Psoas muscle (tissue), 8 donors: ENCODE measurements at regions of chr17 and their contacts with region 1.

Region 1: GRCh38 chr17:42061646-42062487 is 11.5 kb upstream of the C17orf113 start:
- DNase-seq: no peak
- ATAC-seq: no peak
- H3K4me3 ChIP-seq: no peak overlapping the region
- H3K27ac ChIP-seq: no peak overlapping the region
- H3K4me1 ChIP-seq: peaks cover 10% of the 10 kb centered on the region
- H3K27me3 ChIP-seq: no peaks in the 10 kb centered on the region
- CTCF ChIP-seq: no peak

Region 2: DNA sequence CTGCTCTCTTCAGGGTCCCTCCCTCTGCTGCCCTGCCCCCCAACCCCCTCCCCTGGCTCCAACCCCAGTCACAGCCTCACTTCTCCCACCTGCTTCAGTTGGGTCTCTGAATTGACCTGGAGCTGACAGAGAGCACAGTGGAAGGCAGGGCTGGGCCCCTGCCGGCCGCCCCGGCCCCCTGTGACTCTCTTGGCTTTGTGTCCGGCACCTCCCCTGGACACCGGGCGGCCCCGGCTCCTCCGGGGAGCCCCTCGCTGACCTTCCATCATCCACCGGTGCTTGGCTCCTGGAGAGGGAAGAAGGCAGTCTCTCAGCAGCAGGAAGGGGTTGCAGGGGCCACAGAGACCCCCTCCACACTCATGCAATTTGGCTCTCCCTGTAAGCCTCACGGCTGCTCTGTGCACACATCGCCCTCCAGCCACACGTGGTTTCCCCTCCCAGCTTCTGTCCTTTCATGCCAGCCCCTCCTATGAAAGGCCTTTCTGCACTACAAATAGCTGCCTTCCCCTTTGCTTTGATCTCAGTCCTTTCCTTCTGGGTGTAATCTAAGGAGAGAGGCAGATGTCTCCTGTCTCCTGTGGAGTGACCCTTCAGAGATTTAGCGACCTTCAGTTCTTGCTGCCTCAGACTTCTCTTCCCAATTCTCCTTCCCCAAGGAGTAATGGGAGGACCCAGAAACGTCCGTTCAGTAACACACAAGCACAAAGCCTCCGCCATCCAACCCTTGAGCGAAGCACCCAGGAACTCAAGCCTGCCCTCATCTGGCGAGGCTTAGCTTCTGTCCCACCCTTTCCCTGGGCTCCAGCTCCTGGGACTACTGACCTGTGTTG is 33.7 kb before region 1 on chr17:
- intact Hi-C with region 1: loop called (anchors 5 kb)
- DNase-seq: no peak
- ATAC-seq: no peak
- H3K4me3 ChIP-seq: no peak overlapping the region
- H3K27ac ChIP-seq: no peak overlapping the region
- H3K4me1 ChIP-seq: peaks cover 14% of the 10 kb centered on the region
- H3K27me3 ChIP-seq: no peaks in the 10 kb centered on the region
- CTCF ChIP-seq: peak; percentile 9